Colonic mucosa (tissue), 4 donors: ENCODE measurements at regions of chr12 and their contacts with region 1.

Region 1: DNA sequence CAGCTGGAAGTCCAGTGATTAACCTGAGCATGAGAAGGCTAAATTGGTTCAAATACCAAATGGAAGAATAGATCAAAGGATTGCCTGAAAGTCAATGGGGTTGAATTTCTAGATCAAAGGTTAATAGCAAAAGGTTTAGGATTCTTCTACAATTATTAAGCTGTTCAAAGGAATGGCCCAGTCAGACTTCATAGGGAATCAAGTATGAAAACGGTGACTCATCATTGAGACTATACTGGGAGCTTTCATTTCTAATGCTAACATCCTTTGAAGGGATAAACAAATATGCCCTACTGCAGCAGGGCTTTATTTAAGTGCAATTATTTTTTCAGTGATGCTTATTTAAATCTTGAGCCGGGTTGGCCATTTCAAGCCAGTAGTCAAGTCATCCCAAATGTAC is 152.8 kb downstream of the RIMBP2 start:
- DNase-seq: no peak
- H3K4me3 ChIP-seq: no peak overlapping the region
- H3K27ac ChIP-seq: no peak overlapping the region
- H3K4me1 ChIP-seq: no peaks in the 10 kb centered on the region
- H3K27me3 ChIP-seq: no peaks in the 10 kb centered on the region
- CTCF ChIP-seq: no peak

Region 2: DNA sequence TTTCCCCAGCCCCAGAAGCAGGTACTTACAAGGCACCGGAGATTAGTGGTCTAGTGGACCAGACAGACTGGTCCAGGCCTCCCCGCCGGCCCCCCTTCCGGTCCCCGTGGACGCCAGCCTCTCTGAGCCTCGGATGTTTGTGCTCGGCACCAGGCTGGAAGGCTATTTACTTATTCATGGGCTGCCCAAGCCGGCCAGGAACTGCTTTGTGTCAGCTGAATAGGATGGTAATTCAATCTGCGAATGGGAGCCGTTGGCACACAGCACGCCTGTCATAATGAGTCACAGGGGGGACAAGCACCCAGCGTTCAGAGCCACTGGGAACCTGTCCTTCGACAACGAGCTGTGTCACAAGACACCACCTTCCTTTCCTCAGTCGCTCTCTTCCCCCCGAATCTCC is 70.5 kb after region 1 on chr12:
- intact Hi-C with region 1: loop called (anchors 5 kb)
- DNase-seq: peak; percentile 27
- H3K4me3 ChIP-seq: no peak overlapping the region
- H3K27ac ChIP-seq: no peak overlapping the region
- H3K4me1 ChIP-seq: no peaks in the 10 kb centered on the region
- H3K27me3 ChIP-seq: no peaks in the 10 kb centered on the region
- CTCF ChIP-seq: no peak

Region 3: DNA sequence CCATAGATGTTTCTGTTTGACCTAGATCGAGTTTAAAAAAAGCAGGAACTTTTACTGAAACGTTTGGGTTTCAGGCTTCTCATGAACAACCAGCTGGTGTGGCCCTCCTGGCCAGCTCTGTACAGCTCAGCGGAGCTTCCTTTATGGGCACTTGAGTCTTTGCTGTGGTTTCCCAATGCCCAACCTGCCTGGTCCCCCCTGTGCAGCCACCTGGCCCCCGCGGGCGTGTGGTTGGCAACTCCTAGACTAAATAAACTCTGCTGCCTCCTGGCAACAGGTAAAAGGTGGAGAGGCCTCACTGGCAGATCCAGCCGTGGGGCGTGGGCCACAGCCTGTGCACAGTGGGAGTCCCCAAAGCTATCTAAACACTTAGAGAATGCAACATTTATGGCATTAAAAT is 429.1 kb after region 1 on chr12:
- intact Hi-C with region 1: no loop called
- DNase-seq: no peak
- H3K4me3 ChIP-seq: no peak overlapping the region
- H3K27ac ChIP-seq: no peak overlapping the region
- H3K4me1 ChIP-seq: no peaks in the 10 kb centered on the region
- H3K27me3 ChIP-seq: no peaks in the 10 kb centered on the region
- CTCF ChIP-seq: no peak